Motor neuron (in vitro differentiated cells): ENCODE measurements at regions of chr17 and their contacts with region 1.

Region 1: DNA sequence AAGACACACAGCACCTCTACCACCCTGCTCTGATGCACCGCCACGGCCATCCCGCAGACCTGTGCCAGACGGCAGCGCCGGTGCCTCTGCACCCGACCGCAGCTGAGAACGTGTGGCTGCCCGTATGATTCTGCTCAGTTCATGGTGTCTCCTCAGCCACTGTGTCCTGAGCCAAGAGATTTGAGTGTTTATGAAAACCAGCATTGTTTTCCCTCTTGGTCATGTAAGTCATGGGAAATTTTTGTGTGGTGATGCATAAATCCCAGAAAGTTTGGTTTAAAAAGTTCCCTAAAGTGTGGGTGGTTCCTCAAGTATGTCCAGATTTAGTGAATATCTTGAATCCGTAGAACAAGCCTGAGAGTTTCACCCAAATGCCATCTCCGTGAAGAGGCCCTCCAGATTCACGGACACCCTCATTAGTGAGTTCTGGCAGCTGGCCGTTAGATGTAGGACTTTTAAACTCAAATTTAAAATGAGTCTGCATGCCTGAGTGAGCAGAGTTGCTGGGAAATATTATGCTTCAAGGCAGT is 57.6 kb downstream of the CDRT4 start:
- ATAC-seq: peak in 3 of 8 experiments; percentile 27 to 68 (median 60)
- H3K4me3 ChIP-seq: no peak overlapping the region
- H3K27ac ChIP-seq: no peak overlapping the region
- H3K4me1 ChIP-seq: no peaks in the 10 kb centered on the region

Region 2: GRCh38 chr17:15502369-15503112 is 92.8 kb after region 1 on chr17:
- in situ Hi-C with region 1: loop called in 1 of 9 experiments (anchors 25 kb)
- ATAC-seq: peak; percentile 62 to 98 (median 84)
- H3K4me3 ChIP-seq: no peak overlapping the region
- H3K27ac ChIP-seq: no peak overlapping the region
- H3K4me1 ChIP-seq: no peaks in the 10 kb centered on the region

Region 3: GRCh38 chr17:15883617-15884111 is 473.9 kb after region 1 on chr17:
- in situ Hi-C with region 1: no loop called
- ATAC-seq: peak in 5 of 8 experiments; percentile 30 to 83 (median 72)
- H3K4me3 ChIP-seq: no peak overlapping the region
- H3K27ac ChIP-seq: no peak overlapping the region
- H3K4me1 ChIP-seq: no peaks in the 10 kb centered on the region